H1 (cell line): ENCODE measurements at regions of chr9 and their contacts with region 1.

Region 1: DNA sequence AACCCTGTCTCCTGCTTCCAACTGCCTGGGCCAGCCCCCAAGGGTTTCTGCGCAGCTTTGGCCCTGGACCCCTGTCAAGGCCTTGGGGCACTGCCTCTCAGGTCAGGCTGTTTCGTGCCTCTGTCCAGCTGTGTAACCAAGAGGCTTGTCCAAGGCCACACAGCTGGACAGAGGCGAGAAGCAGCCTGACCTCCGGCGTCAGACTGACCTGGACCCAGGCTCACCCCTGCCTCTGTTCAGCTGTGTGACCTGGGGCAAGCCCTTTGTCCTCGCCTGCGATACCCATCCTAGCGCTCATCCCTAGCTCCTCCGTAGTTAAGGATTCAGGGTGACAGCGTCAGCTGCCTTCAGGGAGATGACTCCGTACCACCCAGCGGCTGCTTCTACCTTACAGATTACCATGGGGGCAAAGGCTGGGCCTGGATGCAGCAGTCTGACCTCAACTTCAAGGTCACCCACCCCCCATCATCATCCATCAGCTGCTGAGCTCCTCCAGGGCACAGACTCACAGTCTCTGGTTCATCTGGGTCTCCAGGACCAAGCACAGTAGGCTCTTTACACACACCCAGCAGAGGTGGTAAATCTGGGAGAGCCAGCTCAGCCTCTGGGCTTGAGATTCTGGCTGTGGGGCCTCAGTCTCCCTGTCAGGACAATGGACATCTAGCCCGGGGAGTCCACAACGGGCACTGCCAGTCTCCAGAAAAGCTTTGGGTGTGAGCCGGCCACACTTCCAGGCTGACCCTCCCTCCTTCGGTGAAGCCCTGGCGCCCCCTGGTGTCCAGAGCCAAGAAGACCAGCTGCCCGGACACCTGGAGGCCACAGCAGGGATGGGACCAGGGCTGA is 7.9 kb downstream of the AK1 start:
- DNase-seq: peak; percentile 59 to 98
- H3K4me3 ChIP-seq: no peak overlapping the region
- H3K27ac ChIP-seq: no peak overlapping the region
- H3K4me1 ChIP-seq: peaks cover 0 to 8% (median 2%) of the 10 kb centered on the region in 4 experiments; a peak in 1 of 7 replicates
- H3K27me3 ChIP-seq: no peaks in the 10 kb centered on the region; a peak in 1 of 7 replicates
- CTCF ChIP-seq: peak in 2 of 3 experiments; percentile 94 to 99; a peak in 3 of 4 replicates
- EP300 ChIP-seq: no peak
- POLR2A ChIP-seq: no peak
- RAD21 ChIP-seq: peak; percentile 96 to 97

Region 2: DNA sequence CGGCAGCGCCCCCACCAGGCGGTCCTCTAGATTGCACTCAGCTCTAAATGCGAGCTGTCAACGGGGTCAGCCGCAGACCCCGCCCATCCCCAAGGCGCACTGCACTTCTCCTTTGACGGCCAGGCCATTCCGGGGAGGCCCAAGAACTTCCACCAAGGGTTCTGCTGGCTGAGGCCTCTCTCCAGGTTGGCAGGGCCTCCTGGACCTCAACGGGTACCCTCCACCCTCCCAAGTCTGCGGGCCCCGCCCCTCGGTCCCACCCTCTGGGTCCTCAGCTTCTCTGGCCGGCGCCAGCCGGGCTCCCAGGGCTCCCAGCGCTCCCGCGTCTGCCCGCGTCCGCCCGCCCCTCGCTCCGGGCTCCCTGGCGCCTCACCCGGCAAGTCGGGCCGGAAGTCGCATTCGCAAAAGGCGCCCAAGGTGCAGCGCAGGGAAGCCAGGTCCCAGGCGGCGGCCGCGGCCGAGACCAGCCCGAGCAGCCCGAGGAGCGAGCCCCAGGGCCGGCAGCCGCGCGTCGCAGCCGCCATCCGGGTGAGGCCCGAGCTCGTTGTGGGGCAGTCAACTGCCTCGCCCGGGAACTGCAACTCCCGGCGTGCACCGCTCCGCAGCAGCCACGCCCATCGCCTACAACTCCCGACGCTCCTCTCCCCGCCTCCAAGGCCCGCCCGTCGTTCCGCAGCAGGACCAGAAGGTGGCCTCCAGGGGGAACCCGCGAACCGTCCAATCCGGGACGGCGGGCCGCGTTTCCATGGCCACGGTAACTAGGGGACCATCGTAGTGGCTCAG is 134.6 kb before region 1 on chr9 and contains the start of gene TOR2A:
- CTCF ChIA-PET with region 1: interaction called, 14 read pairs
- POLR2A ChIA-PET with region 1: no interaction called
- DNase-seq: peak; percentile 96 to 99
- H3K4me3 ChIP-seq: peak within 1 kb of the TSS; percentile 35 to 78 (median 67)
- H3K27ac ChIP-seq: peak within 1 kb of the TSS; percentile 46; the same call in 1 of the 2 replicates
- H3K4me1 ChIP-seq: peaks cover 3 to 11% (median 6%) of the 10 kb centered on the region in 4 experiments; a peak in 6 of 7 replicates
- H3K27me3 ChIP-seq: no peaks in the 10 kb centered on the region
- CTCF ChIP-seq: peak in 2 of 3 experiments; percentile 92 to 99; a peak in 3 of 4 replicates
- EP300 ChIP-seq: peak in 1 of 2 experiments; percentile 68; a peak in 1 of 3 replicates
- POLR2A ChIP-seq: no peak
- RAD21 ChIP-seq: peak; percentile 89 to 93
- total RNA-seq, gene TOR2A: 18.4 and 18.7 TPM in 2 replicates

Region 3: GRCh38 chr9:127785023-127785932 is 84.3 kb before region 1 on chr9:
- CTCF ChIA-PET with region 1: interaction called, 28 read pairs
- POLR2A ChIA-PET with region 1: interaction called, 4 read pairs
- DNase-seq: peak in 1 of 2 experiments; percentile 95
- H3K4me3 ChIP-seq: peak overlapping the region; percentile 43 to 100 (median 57)
- H3K27ac ChIP-seq: peak overlapping the region; percentile 62; the same call in 1 of the 2 replicates
- H3K4me1 ChIP-seq: peaks cover 0 to 6% (median 3%) of the 10 kb centered on the region in 4 experiments; a peak in 4 of 7 replicates
- H3K27me3 ChIP-seq: no peaks in the 10 kb centered on the region
- CTCF ChIP-seq: peak in 2 of 3 experiments; percentile 65 to 91; a peak in 3 of 4 replicates
- EP300 ChIP-seq: 0 out of 3 replicates have a peak, but pooled peaks of 1 of the 2 experiments have one; percentile 40
- POLR2A ChIP-seq: no peak
- RAD21 ChIP-seq: peak; percentile 77 to 84

Region 4: DNA sequence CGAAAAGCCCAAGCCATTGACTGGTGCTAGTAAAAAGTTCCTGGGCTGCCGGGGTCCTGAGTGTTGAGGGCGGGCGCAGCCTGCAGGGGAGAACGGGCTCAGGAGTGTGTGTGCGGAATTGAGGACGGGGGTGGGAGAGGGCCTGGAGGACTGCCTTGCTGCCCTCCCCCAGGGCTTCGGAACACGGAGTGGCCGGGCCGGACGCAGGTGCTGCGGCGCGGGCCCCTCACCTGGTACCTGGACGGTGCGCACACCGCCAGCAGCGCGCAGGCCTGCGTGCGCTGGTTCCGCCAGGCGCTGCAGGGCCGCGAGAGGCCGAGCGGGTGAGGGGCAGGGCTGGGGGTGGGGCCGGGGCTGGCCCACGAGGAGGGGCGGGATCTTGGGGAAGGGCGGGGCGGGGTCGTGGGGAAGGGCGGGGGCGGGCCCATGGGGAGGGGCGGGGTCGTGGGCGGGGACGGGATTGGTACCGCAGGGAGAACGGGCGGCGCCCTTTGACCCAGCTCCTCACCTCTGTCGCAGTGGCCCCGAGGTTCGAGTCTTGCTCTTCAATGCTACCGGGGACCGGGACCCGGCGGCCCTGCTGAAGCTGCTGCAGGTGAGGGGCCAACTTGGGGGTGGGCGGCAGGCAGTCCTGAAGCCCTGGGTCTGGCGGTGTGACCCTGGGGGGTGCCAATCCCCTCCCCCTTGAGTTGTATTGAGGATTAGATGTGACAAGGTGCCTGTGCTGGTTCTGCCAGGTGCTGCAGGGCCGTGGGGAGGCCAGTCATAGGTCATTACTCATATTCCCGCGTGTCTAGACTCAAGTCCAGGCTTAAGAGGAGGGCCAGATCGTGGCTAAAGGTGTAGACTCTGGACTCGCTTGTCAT is 59.8 kb before region 1 on chr9:
- CTCF ChIA-PET with region 1: interaction called, 20 read pairs
- POLR2A ChIA-PET with region 1: interaction called, 5 read pairs
- DNase-seq: peak in 1 of 2 experiments; percentile 74
- H3K4me3 ChIP-seq: peak overlapping the region in 3 of 4 experiments; percentile 15 to 47 (median 19); a peak in 4 of 8 replicates
- H3K27ac ChIP-seq: peak overlapping the region; percentile 60; the same call in 1 of the 2 replicates
- H3K4me1 ChIP-seq: peaks cover 0 to 8% (median 6%) of the 10 kb centered on the region in 4 experiments; a peak in 5 of 7 replicates
- H3K27me3 ChIP-seq: no peaks in the 10 kb centered on the region
- CTCF ChIP-seq: 0 out of 4 replicates have a peak, but pooled peaks of 1 of the 3 experiments have one; percentile 2
- EP300 ChIP-seq: no peak
- POLR2A ChIP-seq: 0 out of 3 replicates have a peak, but pooled peaks of 1 of the 2 experiments have one; percentile 13
- RAD21 ChIP-seq: 0 out of 4 replicates have a peak, but pooled peaks of 1 of the 2 experiments have one; percentile 2

Region 5: GRCh38 chr9:127838375-127839078 is 31.0 kb before region 1 on chr9:
- CTCF ChIA-PET with region 1: interaction called, 51 read pairs
- POLR2A ChIA-PET with region 1: interaction called, 3 read pairs
- DNase-seq: no peak
- H3K4me3 ChIP-seq: no peak overlapping the region
- H3K27ac ChIP-seq: no peak overlapping the region
- H3K4me1 ChIP-seq: peaks cover 0 to 4% (median 0%) of the 10 kb centered on the region in 4 experiments; a peak in 2 of 7 replicates
- H3K27me3 ChIP-seq: no peaks in the 10 kb centered on the region; a peak in 1 of 7 replicates
- CTCF ChIP-seq: no peak
- EP300 ChIP-seq: no peak
- POLR2A ChIP-seq: no peak
- RAD21 ChIP-seq: no peak

Region 6: DNA sequence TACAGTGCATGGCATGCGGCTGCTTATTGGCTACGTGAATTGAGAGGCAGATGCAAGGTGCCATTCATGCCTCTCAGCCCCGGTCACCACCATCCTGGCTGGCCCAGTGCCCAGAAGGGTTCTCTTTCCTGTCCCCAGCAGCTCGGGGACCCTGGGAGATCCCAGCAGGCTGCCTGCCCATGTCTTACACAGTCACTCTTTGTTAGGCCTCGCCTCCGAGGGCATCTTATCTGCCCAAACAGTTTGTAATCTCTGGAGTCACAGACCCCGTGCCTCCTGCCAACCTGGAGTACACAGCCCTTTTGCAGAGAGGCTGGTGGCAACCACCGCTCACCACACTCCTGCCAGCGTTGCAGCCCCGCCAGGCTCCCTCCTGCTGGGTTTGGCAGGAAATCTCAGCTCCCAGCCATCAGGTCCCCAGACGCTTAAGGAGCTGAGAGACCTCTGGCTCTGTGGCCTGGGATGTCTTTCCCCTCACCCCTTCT is 14.9 kb after region 1 on chr9:
- CTCF ChIA-PET with region 1: interaction called, 18 read pairs
- POLR2A ChIA-PET with region 1: interaction called, 11 read pairs
- DNase-seq: no peak
- H3K4me3 ChIP-seq: no peak overlapping the region
- H3K27ac ChIP-seq: no peak overlapping the region
- H3K4me1 ChIP-seq: no peaks in the 10 kb centered on the region; a peak in 3 of 7 replicates
- H3K27me3 ChIP-seq: no peaks in the 10 kb centered on the region
- CTCF ChIP-seq: no peak
- EP300 ChIP-seq: no peak
- POLR2A ChIP-seq: no peak
- RAD21 ChIP-seq: no peak

Region 7: DNA sequence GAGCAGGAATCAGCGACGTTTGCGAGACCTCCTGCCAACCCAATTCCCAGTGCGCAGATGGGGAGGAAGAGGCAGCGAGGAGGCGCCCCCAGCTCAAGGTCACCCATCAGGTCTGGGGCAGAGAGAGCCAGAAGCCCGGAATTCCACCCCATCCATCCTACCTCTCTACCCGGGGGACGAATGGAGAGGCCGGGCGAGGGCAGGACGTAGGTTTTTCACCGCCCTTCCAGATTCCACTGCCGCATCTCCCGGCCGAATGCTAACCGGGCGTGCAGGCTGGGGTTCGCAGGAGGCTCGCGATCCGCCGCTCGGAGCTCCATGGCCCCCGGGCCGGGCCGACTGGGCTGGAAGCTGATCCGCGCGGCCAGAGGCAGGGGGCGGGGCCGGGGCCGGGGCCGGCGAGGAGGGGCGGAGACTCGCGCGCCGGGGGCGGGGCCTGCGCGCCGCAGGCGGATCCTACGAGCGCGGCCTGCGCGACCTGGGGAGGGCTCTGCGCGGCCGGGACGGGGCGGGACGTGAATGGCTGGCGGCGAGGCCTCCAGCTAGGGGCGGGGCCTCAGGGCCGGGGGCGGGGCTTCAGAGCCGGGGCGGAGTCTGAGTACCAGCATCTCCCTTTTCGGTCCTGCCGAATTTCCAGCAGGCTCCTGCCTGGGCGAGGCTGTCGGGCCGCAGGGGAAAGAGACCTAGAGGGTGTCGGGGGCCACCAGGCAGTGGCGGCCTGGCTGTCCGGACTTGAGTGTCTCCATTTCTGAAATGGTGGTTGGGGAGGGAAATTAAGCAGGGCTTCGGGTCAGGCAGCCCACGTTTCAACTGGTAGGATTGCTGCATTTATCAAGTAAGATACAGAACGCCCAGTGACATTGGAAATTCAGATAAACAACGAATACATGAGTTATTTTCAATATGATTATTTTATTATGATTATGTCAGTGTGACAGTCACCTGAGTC is 47.4 kb after region 1 on chr9 and contains the start of gene ST6GALNAC4:
- CTCF ChIA-PET with region 1: interaction called, 114 read pairs
- POLR2A ChIA-PET with region 1: interaction called, 6 read pairs
- DNase-seq: peak in 1 of 2 experiments; percentile 97
- H3K4me3 ChIP-seq: peak within 1 kb of the TSS; percentile 55 to 70 (median 60)
- H3K27ac ChIP-seq: no peak within 1 kb of the TSS
- H3K4me1 ChIP-seq: peaks cover 4 to 8% (median 7%) of the 10 kb centered on the region in 4 experiments
- H3K27me3 ChIP-seq: peaks cover 0 to 12% (median 10%) of the 10 kb centered on the region in 4 experiments; a peak in 5 of 7 replicates
- CTCF ChIP-seq: no peak
- EP300 ChIP-seq: no peak
- POLR2A ChIP-seq: no peak
- RAD21 ChIP-seq: no peak
- total RNA-seq, gene ST6GALNAC4: 21.8 and 27.0 TPM in 2 replicates

Region 8: DNA sequence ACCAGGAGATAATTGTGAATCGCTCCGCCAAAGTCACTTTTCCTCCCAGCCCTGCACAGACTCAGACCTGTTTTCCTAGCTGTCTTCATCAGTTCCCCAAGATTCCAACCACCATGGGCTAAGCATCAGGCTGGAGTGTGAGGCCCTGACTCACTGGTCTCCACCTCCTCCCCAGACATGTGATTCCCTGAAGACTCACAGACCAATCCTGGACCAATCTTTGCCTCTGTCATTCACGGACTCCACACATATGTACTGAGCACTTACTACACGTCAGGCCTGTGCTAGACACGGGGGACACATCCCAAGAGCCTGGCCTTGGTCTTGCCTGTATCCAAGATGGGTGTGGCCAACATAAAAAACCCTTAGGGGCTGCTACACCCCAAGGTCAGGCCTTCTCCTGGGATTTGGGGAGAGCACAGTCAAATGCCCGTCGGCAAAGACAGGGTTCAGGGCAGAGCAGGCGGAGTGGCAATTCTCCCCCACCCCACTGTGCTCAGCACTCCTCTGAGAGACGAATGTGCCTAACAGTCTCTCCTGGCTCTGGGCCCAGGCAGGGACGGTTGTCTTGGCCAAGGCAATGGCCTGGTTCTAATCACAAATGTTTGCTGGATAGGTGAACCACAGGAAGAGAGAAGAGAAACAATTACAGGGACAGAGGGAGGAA is 99.3 kb after region 1 on chr9:
- CTCF ChIA-PET with region 1: no interaction called
- POLR2A ChIA-PET with region 1: no interaction called
- DNase-seq: no peak
- H3K4me3 ChIP-seq: no peak overlapping the region
- H3K27ac ChIP-seq: no peak overlapping the region
- H3K4me1 ChIP-seq: peaks cover 0 to 58% (median 38%) of the 10 kb centered on the region in 4 experiments; a peak in 6 of 7 replicates
- H3K27me3 ChIP-seq: no peaks in the 10 kb centered on the region
- CTCF ChIP-seq: no peak
- EP300 ChIP-seq: no peak
- POLR2A ChIP-seq: no peak
- RAD21 ChIP-seq: no peak